ENCODE measurements at regions of chr2 and their contacts with region 1.

Region 1: DNA sequence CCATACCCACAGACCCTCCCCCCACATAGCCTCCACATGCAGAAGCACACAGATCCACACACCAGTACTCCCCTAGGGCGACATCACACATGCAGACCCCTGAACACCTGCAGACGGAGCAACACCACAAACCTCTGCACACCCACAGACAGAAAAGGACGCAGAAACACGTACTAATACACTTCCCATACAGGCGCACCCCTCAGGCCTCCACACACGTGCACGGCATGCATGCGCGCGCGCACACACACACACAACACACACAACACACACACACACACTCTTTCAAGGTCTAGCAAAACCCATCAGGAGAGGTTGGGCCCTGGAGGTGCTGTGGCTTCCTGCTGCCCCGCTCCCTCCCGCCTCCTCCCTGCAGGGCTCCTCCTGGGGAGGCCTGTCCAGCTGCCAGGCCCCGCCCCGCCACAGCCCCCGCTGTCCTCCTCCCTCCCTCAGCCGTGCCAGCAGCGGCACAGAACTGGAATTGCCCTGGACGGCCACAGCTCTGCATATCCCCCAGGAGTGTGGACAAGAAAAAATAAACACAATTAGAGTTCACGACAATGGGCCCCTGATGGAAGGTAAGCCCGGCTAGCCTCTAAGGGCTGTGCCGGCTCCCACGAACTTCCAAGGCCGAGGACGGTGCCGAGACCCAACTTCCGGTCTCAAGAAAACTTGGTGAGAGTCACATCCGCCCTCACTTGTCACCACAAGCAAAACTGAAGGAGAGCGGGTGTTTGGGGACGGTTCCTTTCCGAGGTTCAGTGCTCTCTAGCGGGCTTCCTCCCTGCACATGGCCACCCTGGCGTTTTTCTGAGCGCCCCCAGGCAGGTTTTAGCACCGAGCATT is 6.8 kb downstream of the ZFP36L2 start:
- DNase-seq: peak; percentile 87
- ATAC-seq: peak; percentile 58
- H3K4me3 ChIP-seq: peak overlapping the region; percentile 80 to 97 (median 89)
- H3K27ac ChIP-seq: peak overlapping the region; percentile 89
- H3K4me1 ChIP-seq: peaks cover 53% of the 10 kb centered on the region
- H3K27me3 ChIP-seq: no peaks in the 10 kb centered on the region; a peak in 1 of 5 replicates
- CTCF ChIP-seq: peak; percentile 22
- EP300 ChIP-seq: 0 out of 4 replicates have a peak, but pooled peaks of 1 of the 2 experiments have one; percentile 34
- POLR2A ChIP-seq: peak in 1 of 2 experiments; percentile 74; a peak in 2 of 4 replicates
- RAD21 ChIP-seq: no peak

Region 2: DNA sequence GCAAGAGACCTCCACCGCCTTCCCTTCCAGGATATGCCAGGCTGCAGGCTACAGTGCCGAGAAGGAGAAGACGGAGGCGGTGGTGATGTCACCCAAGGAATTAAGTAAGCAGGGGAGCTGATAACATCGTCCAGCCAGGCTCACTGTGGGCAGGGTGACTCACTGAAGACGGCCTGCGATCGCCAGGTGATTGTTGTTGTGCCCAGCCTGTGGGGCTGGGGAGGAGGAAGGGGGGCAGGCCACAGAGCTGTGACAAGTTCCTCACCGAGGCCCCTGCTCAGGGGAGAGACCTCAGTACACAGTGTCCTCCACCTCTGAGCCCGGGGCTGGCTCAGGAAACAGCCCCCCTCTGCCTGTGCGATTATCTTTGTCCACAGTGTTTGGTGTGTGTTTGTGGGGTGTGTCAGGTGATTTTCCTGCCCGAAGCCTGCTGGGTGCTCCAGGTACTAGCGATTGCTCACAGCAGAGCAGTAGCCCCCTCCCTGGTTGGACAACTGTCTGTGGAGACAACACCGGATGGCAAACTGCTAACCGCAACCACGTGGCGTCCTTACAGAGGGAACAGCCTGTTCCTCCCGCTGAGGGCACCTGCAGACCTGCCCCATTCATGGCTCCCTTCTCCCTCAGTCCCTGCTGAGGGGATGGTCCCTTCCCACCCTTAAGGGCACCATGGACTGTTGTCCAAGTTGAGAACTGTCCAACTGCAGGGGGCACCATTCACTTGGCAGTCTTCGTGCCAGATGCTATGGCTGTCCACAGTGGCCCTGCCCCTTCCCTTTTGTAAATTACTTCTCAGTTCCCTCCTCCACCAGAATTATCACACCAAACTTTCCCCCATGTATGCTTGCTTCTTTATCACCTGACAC is 88.3 kb before region 1 on chr2:
- CTCF ChIA-PET with region 1: no interaction called
- POLR2A ChIA-PET with region 1: interaction called, 28 read pairs
- in situ Hi-C with region 1: no loop called
- intact Hi-C with region 1: no loop called
- DNase-seq: peak; percentile 80
- ATAC-seq: peak; percentile 68
- H3K4me3 ChIP-seq: peak overlapping the region in 1 of 3 experiments; percentile 34; a peak in 2 of 6 replicates
- H3K27ac ChIP-seq: peak overlapping the region; percentile 11
- H3K4me1 ChIP-seq: peaks cover 86% of the 10 kb centered on the region
- H3K27me3 ChIP-seq: no peaks in the 10 kb centered on the region
- CTCF ChIP-seq: peak; percentile 96
- EP300 ChIP-seq: peak in 1 of 2 experiments; percentile 15; a peak in 1 of 4 replicates
- POLR2A ChIP-seq: no peak
- RAD21 ChIP-seq: peak; percentile 97

Region 3: GRCh38 chr2:43158259-43158880 is 61.2 kb before region 1 on chr2:
- CTCF ChIA-PET with region 1: interaction called, 3 read pairs
- POLR2A ChIA-PET with region 1: interaction called, 76 read pairs
- in situ Hi-C with region 1: loop called (anchors 10 kb)
- intact Hi-C with region 1: loop called (anchors 2 kb)
- DNase-seq: peak; percentile 74
- ATAC-seq: peak; percentile 47
- H3K4me3 ChIP-seq: peak overlapping the region; percentile 39 to 70 (median 53)
- H3K27ac ChIP-seq: peak overlapping the region; percentile 57
- H3K4me1 ChIP-seq: peaks cover 90% of the 10 kb centered on the region
- H3K27me3 ChIP-seq: no peaks in the 10 kb centered on the region
- CTCF ChIP-seq: no peak
- EP300 ChIP-seq: no peak; a peak in 1 of 4 replicates
- POLR2A ChIP-seq: peak in 1 of 2 experiments; percentile 63; a peak in 3 of 4 replicates
- RAD21 ChIP-seq: 0 out of 2 replicates have a peak, but pooled peaks have one; percentile 7

Region 4: DNA sequence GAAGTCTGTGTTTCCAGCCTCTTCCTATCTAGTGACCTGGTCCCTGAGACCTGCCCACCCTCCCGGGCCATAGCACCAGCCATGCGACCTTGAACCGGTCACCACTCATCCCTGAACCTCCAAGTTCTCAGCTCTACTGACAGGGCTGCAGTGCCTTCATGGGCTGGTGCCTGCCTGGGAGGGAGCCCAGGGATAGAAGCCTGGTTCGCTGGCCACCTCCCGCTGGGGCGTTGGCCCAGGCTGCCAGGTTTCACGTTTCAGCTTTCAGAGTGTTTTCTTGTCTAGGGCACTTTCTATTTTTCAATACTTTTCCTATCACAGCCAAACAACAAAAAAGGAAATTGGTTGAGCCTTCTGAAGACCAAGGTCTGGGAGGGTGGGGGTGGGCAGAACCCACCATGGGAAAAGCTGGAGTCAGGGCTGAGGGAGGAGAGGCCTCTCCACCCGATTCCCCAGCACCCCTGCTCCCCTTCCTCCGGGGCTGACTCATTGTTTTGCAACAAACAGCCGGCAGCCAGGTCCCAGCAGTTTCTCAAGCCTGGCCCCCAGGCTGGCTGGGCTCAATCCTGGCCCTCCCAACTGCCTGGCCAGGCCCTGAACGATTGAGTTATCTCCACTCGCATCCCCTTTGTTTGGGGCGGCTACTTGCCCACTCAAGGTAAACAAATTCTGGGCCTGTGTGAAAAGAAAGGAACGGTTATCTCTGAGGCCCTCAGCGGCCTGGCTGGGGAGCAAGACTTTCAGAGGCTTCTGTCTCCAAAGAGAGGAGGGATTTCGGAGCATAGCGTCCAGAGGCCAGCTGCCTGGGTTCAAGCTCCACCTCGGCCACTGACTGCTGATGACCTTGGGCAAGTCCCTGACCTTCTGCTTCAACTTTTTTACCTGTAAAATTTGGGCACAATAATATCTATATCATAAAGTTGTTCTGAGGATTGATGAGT is 40.7 kb before region 1 on chr2:
- CTCF ChIA-PET with region 1: no interaction called
- POLR2A ChIA-PET with region 1: interaction called, 79 read pairs
- in situ Hi-C with region 1: no loop called
- intact Hi-C with region 1: no loop called
- DNase-seq: peak; percentile 90
- ATAC-seq: peak; percentile 88
- H3K4me3 ChIP-seq: peak overlapping the region; percentile 43 to 62 (median 61)
- H3K27ac ChIP-seq: peak overlapping the region; percentile 81
- H3K4me1 ChIP-seq: peaks cover 77% of the 10 kb centered on the region
- H3K27me3 ChIP-seq: no peaks in the 10 kb centered on the region
- CTCF ChIP-seq: peak; percentile 1; the same call in 1 of the 2 replicates
- EP300 ChIP-seq: peak in 1 of 2 experiments; percentile 77; a peak in 2 of 4 replicates
- POLR2A ChIP-seq: no peak; a peak in 1 of 4 replicates
- RAD21 ChIP-seq: peak; percentile 20; the same call in 1 of the 2 replicates

Region 5: GRCh38 chr2:43194121-43194869 is 25.3 kb before region 1 on chr2:
- CTCF ChIA-PET with region 1: no interaction called
- POLR2A ChIA-PET with region 1: interaction called, 324 read pairs
- in situ Hi-C with region 1: no loop called
- intact Hi-C with region 1: loop called (anchors 1 kb)
- DNase-seq: peak; percentile 98
- ATAC-seq: peak; percentile 87
- H3K4me3 ChIP-seq: peak overlapping the region; percentile 49 to 76 (median 64)
- H3K27ac ChIP-seq: peak overlapping the region; percentile 95
- H3K4me1 ChIP-seq: peaks cover 96% of the 10 kb centered on the region
- H3K27me3 ChIP-seq: no peaks in the 10 kb centered on the region
- CTCF ChIP-seq: peak; percentile 14; the same call in 1 of the 2 replicates
- EP300 ChIP-seq: peak; percentile 70 to 94; a peak in 3 of 4 replicates
- POLR2A ChIP-seq: peak in 1 of 2 experiments; percentile 79; a peak in 2 of 4 replicates
- RAD21 ChIP-seq: no peak; the same call in 1 of the 2 replicates

Region 6: GRCh38 chr2:43412121-43412753 is 192.6 kb after region 1 on chr2:
- CTCF ChIA-PET with region 1: no interaction called
- POLR2A ChIA-PET with region 1: no interaction called
- in situ Hi-C with region 1: no loop called
- intact Hi-C with region 1: no loop called
- DNase-seq: no peak
- ATAC-seq: no peak
- H3K4me3 ChIP-seq: no peak overlapping the region
- H3K27ac ChIP-seq: no peak overlapping the region
- H3K4me1 ChIP-seq: peaks cover 39% of the 10 kb centered on the region
- H3K27me3 ChIP-seq: no peaks in the 10 kb centered on the region
- CTCF ChIP-seq: no peak
- EP300 ChIP-seq: no peak
- POLR2A ChIP-seq: no peak
- RAD21 ChIP-seq: no peak

Measured in HepG2 (cell line).